ENCODE measurements at regions of chr10 and their contacts with region 1.

Region 1: DNA sequence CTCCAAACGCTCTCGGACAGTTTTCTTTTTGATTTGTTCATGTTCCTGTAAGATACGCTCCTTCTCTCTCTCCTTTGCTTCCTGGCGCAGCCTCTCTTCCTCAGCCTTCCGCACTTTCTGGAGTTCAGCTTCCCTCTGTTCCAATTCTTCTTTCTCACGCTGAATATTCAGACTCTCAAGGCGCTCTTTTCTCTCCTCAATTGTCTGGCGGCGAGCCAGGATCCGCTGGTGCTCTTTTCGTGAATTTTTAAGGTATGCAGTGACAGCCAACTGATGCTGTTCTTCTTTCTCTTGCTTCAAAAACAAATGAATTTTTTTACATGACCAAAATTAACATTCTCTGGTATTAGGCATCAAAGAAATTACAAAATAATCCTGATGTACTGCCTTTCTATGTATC is 22.6 kb downstream of the EIF3A start:
- DNase-seq: no peak
- H3K4me3 ChIP-seq: no peak overlapping the region
- H3K4me3 Mint-ChIP-seq: no peak overlapping the region
- H3K27ac ChIP-seq: no peak overlapping the region
- H3K27ac Mint-ChIP-seq: peak overlapping the region in 3 of 7 donors; percentile 2 to 56 (median 6)
- H3K4me1 ChIP-seq: no peaks in the 10 kb centered on the region
- H3K4me1 Mint-ChIP-seq: peaks cover 4% of the 10 kb centered on the region
- H3K27me3 ChIP-seq: no peaks in the 10 kb centered on the region
- H3K27me3 Mint-ChIP-seq: no peaks in the 10 kb centered on the region
- CTCF ChIP-seq: no peak

Region 2: GRCh38 chr10:118911361-118911760 is 146.6 kb before region 1 on chr10:
- intact Hi-C with region 1: no loop called
- DNase-seq: no peak
- H3K4me3 ChIP-seq: no peak overlapping the region
- H3K4me3 Mint-ChIP-seq: no peak overlapping the region
- H3K27ac ChIP-seq: no peak overlapping the region
- H3K27ac Mint-ChIP-seq: no peak overlapping the region
- H3K4me1 ChIP-seq: no peaks in the 10 kb centered on the region
- H3K4me1 Mint-ChIP-seq: no peaks in the 10 kb centered on the region
- H3K27me3 ChIP-seq: no peaks in the 10 kb centered on the region
- H3K27me3 Mint-ChIP-seq: peaks cover 8 to 10% (median 9%) of the 10 kb centered on the region in 3 donors
- CTCF ChIP-seq: no peak

Region 3: DNA sequence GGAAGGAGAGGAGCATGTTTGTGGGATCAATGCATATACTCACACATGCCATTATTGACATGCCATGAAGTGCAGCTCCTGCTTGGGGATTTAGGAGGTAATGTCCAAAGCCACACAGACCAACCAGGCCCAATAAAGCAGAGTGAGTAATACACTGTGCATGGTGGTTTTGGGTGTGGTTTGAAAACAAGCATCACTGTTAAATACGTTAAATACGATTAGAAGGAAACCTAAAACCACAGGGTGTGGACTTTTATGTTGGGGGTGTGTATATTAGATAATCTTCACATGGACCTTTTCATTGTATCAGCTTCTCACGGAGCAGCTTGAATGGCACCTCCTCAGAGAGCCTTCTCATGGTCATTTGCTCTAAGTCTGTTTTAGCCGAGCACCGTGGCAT is 33.0 kb after region 1 on chr10:
- intact Hi-C with region 1: no loop called
- DNase-seq: peak; percentile 71 to 79 (median 74)
- H3K4me3 ChIP-seq: no peak overlapping the region
- H3K4me3 Mint-ChIP-seq: peak overlapping the region in 1 of 2 donors; percentile 46
- H3K27ac ChIP-seq: peak overlapping the region; percentile 22 to 84
- H3K27ac Mint-ChIP-seq: peak overlapping the region; percentile 82 to 94 (median 91)
- H3K4me1 ChIP-seq: peaks cover 25 to 53% of the 10 kb centered on the region in 2 donors
- H3K4me1 Mint-ChIP-seq: peaks cover 54% of the 10 kb centered on the region
- H3K27me3 ChIP-seq: no peaks in the 10 kb centered on the region
- H3K27me3 Mint-ChIP-seq: peaks cover 0 to 3% (median 0%) of the 10 kb centered on the region in 3 donors
- CTCF ChIP-seq: no peak

Region 4: GRCh38 chr10:119928411-119928810 is 870.4 kb after region 1 on chr10:
- intact Hi-C with region 1: loop called in 1 of 2 experiments (anchors 5 kb)
- DNase-seq: no peak
- H3K4me3 ChIP-seq: no peak overlapping the region
- H3K4me3 Mint-ChIP-seq: no peak overlapping the region
- H3K27ac ChIP-seq: no peak overlapping the region
- H3K27ac Mint-ChIP-seq: no peak overlapping the region
- H3K4me1 ChIP-seq: no peaks in the 10 kb centered on the region
- H3K4me1 Mint-ChIP-seq: peaks cover 3% of the 10 kb centered on the region
- H3K27me3 ChIP-seq: no peaks in the 10 kb centered on the region
- H3K27me3 Mint-ChIP-seq: no peaks in the 10 kb centered on the region
- CTCF ChIP-seq: no peak